ENCODE measurements at regions of chr6 and their contacts with region 1.

Region 1: GRCh38 chr6:3456755-3457466 is at the start of gene SLC22A23:
- DNase-seq: peak; percentile 17 to 86
- H3K4me3 ChIP-seq: peak within 1 kb of the TSS; percentile 57 to 72 (median 64)
- H3K27ac ChIP-seq: no peak within 1 kb of the TSS
- H3K4me1 ChIP-seq: peaks cover 7 to 27% (median 23%) of the 10 kb centered on the region in 4 experiments
- H3K27me3 ChIP-seq: peaks cover 2 to 25% (median 13%) of the 10 kb centered on the region in 4 experiments; a peak in 6 of 7 replicates
- CTCF ChIP-seq: peak; percentile 52 to 74 (median 67)
- EP300 ChIP-seq: no peak
- POLR2A ChIP-seq: no peak
- RAD21 ChIP-seq: peak; percentile 30 to 61
- total RNA-seq, gene SLC22A23: 37.1 and 38.4 TPM in 2 replicates

Region 2: DNA sequence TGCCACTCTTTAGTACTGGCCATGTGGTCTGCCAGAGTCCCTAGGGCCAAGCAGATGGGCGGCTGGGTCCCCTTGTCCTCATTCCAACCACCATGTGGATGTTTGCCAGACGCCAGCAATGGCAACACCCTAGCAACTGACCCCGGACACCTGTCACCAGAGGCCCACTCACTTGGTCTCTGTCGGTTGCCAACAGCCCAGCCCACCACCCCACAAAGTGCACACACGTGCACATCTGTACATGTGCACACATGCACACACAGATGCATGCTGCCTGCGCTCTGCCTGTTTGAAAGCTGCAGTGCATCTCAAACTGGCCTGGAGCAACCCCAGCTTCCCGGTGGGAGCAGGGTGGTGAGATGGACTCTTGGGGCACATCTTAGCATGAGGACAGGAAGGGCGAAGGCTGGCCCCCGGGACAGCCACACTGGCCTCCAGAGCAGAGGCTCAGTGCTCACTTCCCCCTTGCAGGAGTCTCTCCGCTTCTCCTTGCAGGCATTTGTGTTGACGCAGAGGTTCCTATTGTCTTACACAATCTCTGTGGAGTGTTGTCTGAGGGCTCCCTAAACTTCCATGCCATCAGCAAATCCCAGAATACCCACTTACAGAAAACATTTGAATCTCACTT is 144.2 kb before region 1 on chr6:
- CTCF ChIA-PET with region 1: no interaction called
- POLR2A ChIA-PET with region 1: no interaction called
- DNase-seq: no peak
- H3K4me3 ChIP-seq: no peak overlapping the region
- H3K27ac ChIP-seq: no peak overlapping the region
- H3K4me1 ChIP-seq: peaks cover 0 to 5% (median 2%) of the 10 kb centered on the region in 4 experiments; a peak in 3 of 7 replicates
- H3K27me3 ChIP-seq: no peaks in the 10 kb centered on the region
- CTCF ChIP-seq: no peak
- EP300 ChIP-seq: no peak
- POLR2A ChIP-seq: no peak
- RAD21 ChIP-seq: no peak

Region 3: DNA sequence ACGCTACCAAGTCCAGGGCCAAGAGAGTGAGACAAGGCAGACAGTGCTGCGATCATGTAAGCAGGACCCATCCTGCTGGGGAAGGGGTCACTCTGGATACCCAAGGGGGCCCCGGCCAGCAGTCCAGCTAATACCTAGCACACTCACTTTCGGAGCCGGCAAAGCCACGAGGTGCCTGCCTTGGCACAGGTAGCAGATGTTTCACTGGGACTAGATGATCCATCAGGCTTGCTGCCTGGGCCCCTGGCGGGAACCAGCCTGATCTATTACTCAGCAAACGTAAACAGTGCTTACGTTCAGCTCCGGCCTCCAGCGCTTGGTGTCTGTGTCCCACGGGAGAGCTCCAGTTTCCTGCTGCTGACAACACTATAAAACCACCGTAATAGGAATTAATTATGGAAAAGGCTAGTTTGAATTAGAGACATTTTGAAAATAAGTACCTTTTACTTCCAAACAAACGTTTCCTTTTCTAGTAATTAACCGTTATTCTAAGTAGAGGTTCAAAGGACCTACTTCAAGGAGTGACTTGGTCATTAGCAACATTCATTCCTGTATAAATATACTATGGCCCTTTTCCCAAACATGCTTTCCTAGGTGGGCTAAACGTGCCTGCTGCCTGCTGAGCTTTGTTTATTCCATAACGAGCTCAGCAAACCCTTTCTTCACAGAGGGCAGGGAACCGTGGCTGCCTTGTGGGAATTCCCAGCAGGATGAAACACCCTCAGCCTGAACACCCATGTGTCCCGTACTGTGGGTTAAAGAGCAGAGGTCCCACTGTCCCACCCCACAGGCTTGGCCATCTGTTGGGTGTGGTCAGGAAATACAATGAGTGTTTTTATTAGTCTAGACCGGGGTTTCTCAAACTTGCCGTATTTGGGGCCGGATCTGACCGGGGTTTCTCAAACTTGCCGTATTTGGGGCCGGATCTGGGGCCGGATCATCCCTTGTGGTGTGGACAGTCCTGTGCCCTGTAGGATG is 18.4 kb before region 1 on chr6:
- CTCF ChIA-PET with region 1: interaction called, 14 read pairs
- POLR2A ChIA-PET with region 1: interaction called, 3 read pairs
- DNase-seq: no peak
- H3K4me3 ChIP-seq: no peak overlapping the region
- H3K27ac ChIP-seq: no peak overlapping the region; the same call in 1 of the 2 replicates
- H3K4me1 ChIP-seq: peaks cover 0 to 4% (median 0%) of the 10 kb centered on the region in 4 experiments; a peak in 2 of 7 replicates
- H3K27me3 ChIP-seq: no peaks in the 10 kb centered on the region
- CTCF ChIP-seq: no peak
- EP300 ChIP-seq: no peak
- POLR2A ChIP-seq: no peak
- RAD21 ChIP-seq: no peak

Region 4: GRCh38 chr6:3444276-3445088 is 12.4 kb before region 1 on chr6:
- CTCF ChIA-PET with region 1: interaction called, 14 read pairs
- POLR2A ChIA-PET with region 1: interaction called, 8 read pairs
- DNase-seq: peak in 1 of 2 experiments; percentile 27
- H3K4me3 ChIP-seq: no peak overlapping the region
- H3K27ac ChIP-seq: no peak overlapping the region; the same call in 1 of the 2 replicates
- H3K4me1 ChIP-seq: peaks cover 2 to 10% (median 8%) of the 10 kb centered on the region in 4 experiments; a peak in 6 of 7 replicates
- H3K27me3 ChIP-seq: no peaks in the 10 kb centered on the region
- CTCF ChIP-seq: no peak
- EP300 ChIP-seq: no peak
- POLR2A ChIP-seq: no peak
- RAD21 ChIP-seq: 0 out of 4 replicates have a peak, but pooled peaks of 1 of the 2 experiments have one; percentile 8

Measured in H1 (cell line).